ENCODE measurements at regions of chr21 and their contacts with region 1.

Region 1: GRCh38 chr21:42892931-42893755 is at the start of gene NDUFV3:
- DNase-seq: peak; percentile 99
- H3K4me3 ChIP-seq: peak within 1 kb of the TSS; percentile 90
- H3K27ac ChIP-seq: peak within 1 kb of the TSS; percentile 81
- H3K4me1 ChIP-seq: peaks cover 4% of the 10 kb centered on the region
- H3K27me3 ChIP-seq: no peaks in the 10 kb centered on the region
- CTCF ChIP-seq: no peak
- total RNA-seq, gene NDUFV3: 39.1 and 39.6 TPM in 2 replicates

Region 2: DNA sequence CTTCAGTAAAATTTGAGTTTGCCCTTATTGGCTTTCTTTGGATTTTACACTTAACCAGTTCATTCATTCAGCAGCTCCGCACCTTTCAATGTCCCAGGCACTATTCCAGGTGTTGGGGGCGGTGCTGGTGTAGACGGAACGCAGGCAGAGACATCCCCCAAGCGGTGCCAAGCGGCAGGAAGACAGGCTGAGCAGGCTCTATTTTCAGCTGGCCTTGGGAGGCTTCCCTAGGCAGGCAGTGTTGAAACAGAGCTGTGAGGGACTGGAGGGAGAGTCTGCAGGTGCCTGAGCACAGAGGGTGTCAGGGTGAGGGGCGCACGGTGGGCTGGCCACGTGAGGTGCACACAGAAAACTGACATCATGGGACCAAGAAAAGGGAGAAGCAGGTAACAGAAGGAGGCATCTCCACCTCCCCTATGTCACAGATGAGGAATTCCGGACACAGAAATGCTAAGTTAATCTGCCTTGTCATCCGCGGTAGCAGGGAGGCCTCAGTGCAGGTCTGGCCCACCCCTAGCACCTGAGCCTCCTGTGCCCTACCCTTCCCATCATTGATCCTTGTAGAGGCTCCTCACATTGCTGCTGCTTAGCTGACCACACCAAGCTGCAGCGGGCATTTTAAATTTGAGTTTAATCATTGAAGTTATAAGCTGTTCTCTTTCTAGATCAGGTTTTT is 338.7 kb before region 1 on chr21:
- CTCF ChIA-PET with region 1: no interaction called
- POLR2A ChIA-PET with region 1: interaction called, 12 read pairs
- intact Hi-C with region 1: no loop called
- DNase-seq: no peak
- H3K4me3 ChIP-seq: no peak overlapping the region
- H3K27ac ChIP-seq: no peak overlapping the region
- H3K4me1 ChIP-seq: no peaks in the 10 kb centered on the region
- H3K27me3 ChIP-seq: no peaks in the 10 kb centered on the region
- CTCF ChIP-seq: no peak